Activated B cell treated with CpG ODN at 0.5 μM for 24 hours (primary cell): ENCODE measurements at regions of chr17 and their contacts with region 1.

Region 1: GRCh38 chr17:7239091-7240027 is at the start of gene PHF23:
- DNase-seq: peak; percentile 93
- ATAC-seq: peak; percentile 64
- H3K4me3 Mint-ChIP-seq: peak within 1 kb of the TSS; percentile 99
- H3K27ac Mint-ChIP-seq: peak within 1 kb of the TSS; percentile 100
- H3K4me1 Mint-ChIP-seq: peaks cover 63% of the 10 kb centered on the region
- H3K27me3 Mint-ChIP-seq: no peaks in the 10 kb centered on the region
- CTCF ChIP-seq: no peak
- total RNA-seq, gene PHF23: 45.5 and 46.6 TPM in 2 replicates

Region 2: GRCh38 chr17:7214300-7215135 is 24.8 kb before region 1 on chr17:
- CTCF ChIA-PET with region 1: interaction called, 8 read pairs
- POLR2A ChIA-PET with region 1: interaction called, 245 read pairs
- intact Hi-C with region 1: loop called (anchors 1 kb)
- DNase-seq: peak; percentile 98
- ATAC-seq: peak; percentile 86
- H3K4me3 Mint-ChIP-seq: peak overlapping the region; percentile 88
- H3K27ac Mint-ChIP-seq: peak overlapping the region; percentile 94
- H3K4me1 Mint-ChIP-seq: peaks cover 53% of the 10 kb centered on the region
- H3K27me3 Mint-ChIP-seq: no peaks in the 10 kb centered on the region
- CTCF ChIP-seq: no peak

Region 3: GRCh38 chr17:7252176-7253043 is 13.1 kb after region 1 on chr17 and contains the start of gene ELP5:
- CTCF ChIA-PET with region 1: interaction called, 3 read pairs
- POLR2A ChIA-PET with region 1: interaction called, 134 read pairs
- intact Hi-C with region 1: loop called (anchors 1 kb)
- DNase-seq: no peak
- ATAC-seq: peak; percentile 61
- H3K4me3 Mint-ChIP-seq: peak within 1 kb of the TSS; percentile 98
- H3K27ac Mint-ChIP-seq: peak within 1 kb of the TSS; percentile 100
- H3K4me1 Mint-ChIP-seq: peaks cover 44% of the 10 kb centered on the region
- H3K27me3 Mint-ChIP-seq: no peaks in the 10 kb centered on the region
- CTCF ChIP-seq: no peak
- total RNA-seq, gene ELP5: 49.2 and 53.6 TPM in 2 replicates

Region 4: GRCh38 chr17:7336240-7337175 is 97.1 kb after region 1 on chr17 and contains the start of gene ACAP1:
- CTCF ChIA-PET with region 1: no interaction called
- POLR2A ChIA-PET with region 1: interaction called, 18 read pairs
- intact Hi-C with region 1: no loop called
- DNase-seq: peak; percentile 67
- ATAC-seq: peak; percentile 96
- H3K4me3 Mint-ChIP-seq: peak within 1 kb of the TSS; percentile 85
- H3K27ac Mint-ChIP-seq: peak within 1 kb of the TSS; percentile 98
- H3K4me1 Mint-ChIP-seq: peaks cover 49% of the 10 kb centered on the region
- H3K27me3 Mint-ChIP-seq: no peaks in the 10 kb centered on the region
- CTCF ChIP-seq: no peak
- total RNA-seq, gene ACAP1: 298 and 328 TPM in 2 replicates

Region 5: GRCh38 chr17:7844292-7845154 is 605.2 kb after region 1 on chr17:
- CTCF ChIA-PET with region 1: no interaction called
- POLR2A ChIA-PET with region 1: interaction called, 3 read pairs
- intact Hi-C with region 1: loop called (anchors 1 kb)
- DNase-seq: peak; percentile 83
- ATAC-seq: peak; percentile 46
- H3K4me3 Mint-ChIP-seq: peak overlapping the region; percentile 98
- H3K27ac Mint-ChIP-seq: peak overlapping the region; percentile 100
- H3K4me1 Mint-ChIP-seq: peaks cover 50% of the 10 kb centered on the region
- H3K27me3 Mint-ChIP-seq: no peaks in the 10 kb centered on the region
- CTCF ChIP-seq: no peak